Heart right ventricle (tissue), 16 donors: ENCODE measurements at regions of chr2 and their contacts with region 1.

Region 1: GRCh38 chr2:64488050-64488974 is 34.4 kb downstream of the LGALSL start:
- DNase-seq: peak; percentile 63 to 72
- ATAC-seq: peak; percentile 34 to 87 (median 76)
- H3K4me3 ChIP-seq: no peak overlapping the region
- H3K27ac ChIP-seq: no peak overlapping the region
- H3K4me1 ChIP-seq: peaks cover 4 to 35% (median 21%) of the 10 kb centered on the region in 9 donors
- H3K27me3 ChIP-seq: peaks cover 0 to 6% (median 0%) of the 10 kb centered on the region in 7 donors
- CTCF ChIP-seq: peak; percentile 94 to 98 (median 97)

Region 2: DNA sequence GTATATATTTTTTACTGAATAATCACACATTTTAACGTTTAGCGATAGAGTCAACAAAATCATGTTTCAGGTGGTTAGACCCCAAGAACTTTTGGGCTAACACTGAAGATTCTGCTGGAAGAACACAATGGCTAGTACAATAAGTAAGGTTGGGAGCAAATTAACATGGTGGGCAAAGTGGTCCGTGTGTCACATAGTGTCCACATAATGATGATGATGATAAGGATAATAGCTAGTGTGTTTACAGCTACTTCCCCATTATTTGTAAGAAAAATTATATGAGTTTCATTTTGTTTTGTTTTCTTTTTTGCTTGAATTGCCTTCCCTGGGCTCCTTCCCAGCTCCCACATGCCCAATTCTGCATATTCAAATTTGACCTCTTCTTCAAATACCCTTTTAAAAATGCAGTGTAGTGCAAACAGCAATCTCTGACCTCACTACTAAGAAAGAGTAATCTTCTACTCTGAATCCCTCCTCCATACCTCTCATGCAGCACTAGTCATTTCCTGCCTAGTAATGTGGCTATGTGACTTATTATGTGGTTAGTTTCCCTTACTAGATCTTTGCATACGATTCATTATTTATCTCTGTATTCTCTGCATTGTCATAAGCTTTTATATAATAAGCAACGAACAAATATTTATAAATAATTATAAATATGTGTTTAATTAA is 452.1 kb before region 1 on chr2:
- intact Hi-C with region 1: loop called in 1 of 10 experiments (anchors 10 kb)
- DNase-seq: no peak
- ATAC-seq: no peak
- H3K4me3 ChIP-seq: no peak overlapping the region
- H3K27ac ChIP-seq: peak overlapping the region in 1 of 10 donors; percentile 10
- H3K4me1 ChIP-seq: peaks cover 0 to 17% (median 0%) of the 10 kb centered on the region in 9 donors
- H3K27me3 ChIP-seq: no peaks in the 10 kb centered on the region
- CTCF ChIP-seq: no peak

Region 3: GRCh38 chr2:64045938-64046337 is 442.4 kb before region 1 on chr2:
- intact Hi-C with region 1: loop called (anchors 2 to 10 kb)
- DNase-seq: no peak
- ATAC-seq: no peak
- H3K4me3 ChIP-seq: no peak overlapping the region
- H3K27ac ChIP-seq: no peak overlapping the region
- H3K4me1 ChIP-seq: peaks cover 0 to 8% (median 7%) of the 10 kb centered on the region in 9 donors
- H3K27me3 ChIP-seq: no peaks in the 10 kb centered on the region
- CTCF ChIP-seq: no peak

Region 4: GRCh38 chr2:64348386-64349130 is 139.8 kb before region 1 on chr2:
- intact Hi-C with region 1: loop called in 1 of 10 experiments (anchors 5 kb)
- DNase-seq: no peak
- ATAC-seq: no peak
- H3K4me3 ChIP-seq: no peak overlapping the region
- H3K27ac ChIP-seq: no peak overlapping the region
- H3K4me1 ChIP-seq: no peaks in the 10 kb centered on the region
- H3K27me3 ChIP-seq: no peaks in the 10 kb centered on the region
- CTCF ChIP-seq: no peak